IMR-90 (cell line): ENCODE measurements at regions of chr3 and their contacts with region 1.

Region 1: DNA sequence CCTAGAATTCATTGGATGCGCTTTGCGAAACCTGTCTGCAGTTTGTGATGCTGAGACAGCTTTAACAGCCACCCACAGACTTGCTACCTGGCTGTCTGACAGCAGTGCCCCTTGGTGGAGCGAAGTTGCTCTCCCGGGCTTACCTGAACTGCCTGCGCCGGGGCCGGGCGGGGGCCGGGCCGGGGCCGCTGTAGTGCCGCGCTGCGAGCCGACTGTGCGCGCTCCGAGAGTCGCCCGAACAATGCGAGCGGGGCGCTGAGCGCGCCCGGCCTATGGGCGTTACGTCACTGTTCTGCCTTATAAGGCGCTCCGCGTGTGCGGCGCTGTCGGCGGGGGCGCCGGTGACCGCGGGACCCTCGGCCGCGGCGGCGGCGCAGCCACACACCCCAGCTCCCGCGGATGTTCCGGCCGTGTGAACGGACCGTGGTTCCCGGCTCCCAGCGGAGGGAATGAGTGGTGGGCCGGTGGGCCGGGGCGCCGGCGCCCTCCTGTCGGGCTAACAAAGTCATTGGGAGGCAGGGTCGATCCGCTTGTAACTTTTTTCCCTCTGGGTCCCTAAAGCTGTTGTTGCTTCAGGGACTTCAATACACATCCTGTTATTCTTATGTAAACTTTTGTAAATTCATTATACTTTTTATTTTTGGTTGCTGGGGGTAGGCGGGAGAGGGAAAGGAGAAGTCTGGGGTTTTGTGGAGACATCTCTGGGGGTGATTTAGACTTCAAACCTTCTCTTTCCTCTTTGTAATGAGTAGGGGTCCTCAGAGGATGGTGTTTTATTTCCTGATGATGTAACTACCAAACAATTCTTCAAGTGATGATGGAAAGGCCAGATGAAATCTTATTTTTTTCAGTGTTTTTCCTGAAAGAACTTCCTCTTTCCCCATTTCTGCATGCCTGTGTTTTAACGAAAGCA is 58.5 kb downstream of the CMSS1 start:
- DNase-seq: peak; percentile 79
- ATAC-seq: peak; percentile 93
- H3K4me3 ChIP-seq: peak overlapping the region; percentile 88
- H3K27ac ChIP-seq: peak overlapping the region; percentile 88
- H3K4me1 ChIP-seq: peaks cover 8% of the 10 kb centered on the region
- H3K27me3 ChIP-seq: no peaks in the 10 kb centered on the region
- CTCF ChIP-seq: 0 out of 2 replicates have a peak, but pooled peaks have one; percentile 19
- POLR2A ChIP-seq: peak; percentile 95
- RAD21 ChIP-seq: peak; percentile 52

Region 2: GRCh38 chr3:99938270-99938911 is 62.2 kb after region 1 on chr3:
- CTCF ChIA-PET with region 1: no interaction called
- POLR2A ChIA-PET with region 1: no interaction called
- dilution Hi-C with region 1: no loop called
- in situ Hi-C with region 1: no loop called
- intact Hi-C with region 1: loop called (anchors 5 kb)
- DNase-seq: peak; percentile 54
- ATAC-seq: no peak; the same call in 1 of the 2 replicates
- H3K4me3 ChIP-seq: no peak overlapping the region
- H3K27ac ChIP-seq: peak overlapping the region; percentile 3; the same call in 1 of the 2 replicates
- H3K4me1 ChIP-seq: peaks cover 14% of the 10 kb centered on the region
- H3K27me3 ChIP-seq: no peaks in the 10 kb centered on the region
- CTCF ChIP-seq: no peak
- POLR2A ChIP-seq: no peak
- RAD21 ChIP-seq: no peak

Region 3: DNA sequence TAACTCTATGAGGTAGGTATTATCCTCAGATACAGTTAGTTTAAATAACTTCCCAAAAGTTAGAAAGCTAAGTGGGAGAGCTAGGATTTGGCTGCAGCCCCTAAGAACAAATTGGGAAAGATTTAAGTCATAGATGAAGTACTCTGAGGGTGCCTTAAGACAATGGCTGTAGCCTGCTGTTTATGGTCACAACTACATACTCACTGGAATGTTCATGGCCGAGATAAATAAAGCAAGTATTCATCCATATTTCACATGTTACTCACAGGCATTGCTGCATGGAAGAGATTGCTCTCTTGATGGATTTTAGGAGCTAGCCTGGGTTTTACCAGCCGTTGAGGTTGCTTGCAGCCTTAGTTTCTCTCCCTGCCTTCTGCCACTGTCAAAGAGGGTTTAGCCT is 86.5 kb after region 1 on chr3:
- CTCF ChIA-PET with region 1: no interaction called
- POLR2A ChIA-PET with region 1: no interaction called
- dilution Hi-C with region 1: no loop called
- in situ Hi-C with region 1: no loop called
- intact Hi-C with region 1: loop called (anchors 1 kb)
- DNase-seq: peak; percentile 91
- ATAC-seq: peak; percentile 90
- H3K4me3 ChIP-seq: no peak overlapping the region
- H3K27ac ChIP-seq: peak overlapping the region; percentile 46; the same call in 1 of the 2 replicates
- H3K4me1 ChIP-seq: peaks cover 17% of the 10 kb centered on the region
- H3K27me3 ChIP-seq: no peaks in the 10 kb centered on the region
- CTCF ChIP-seq: no peak
- POLR2A ChIP-seq: no peak
- RAD21 ChIP-seq: no peak

Region 4: DNA sequence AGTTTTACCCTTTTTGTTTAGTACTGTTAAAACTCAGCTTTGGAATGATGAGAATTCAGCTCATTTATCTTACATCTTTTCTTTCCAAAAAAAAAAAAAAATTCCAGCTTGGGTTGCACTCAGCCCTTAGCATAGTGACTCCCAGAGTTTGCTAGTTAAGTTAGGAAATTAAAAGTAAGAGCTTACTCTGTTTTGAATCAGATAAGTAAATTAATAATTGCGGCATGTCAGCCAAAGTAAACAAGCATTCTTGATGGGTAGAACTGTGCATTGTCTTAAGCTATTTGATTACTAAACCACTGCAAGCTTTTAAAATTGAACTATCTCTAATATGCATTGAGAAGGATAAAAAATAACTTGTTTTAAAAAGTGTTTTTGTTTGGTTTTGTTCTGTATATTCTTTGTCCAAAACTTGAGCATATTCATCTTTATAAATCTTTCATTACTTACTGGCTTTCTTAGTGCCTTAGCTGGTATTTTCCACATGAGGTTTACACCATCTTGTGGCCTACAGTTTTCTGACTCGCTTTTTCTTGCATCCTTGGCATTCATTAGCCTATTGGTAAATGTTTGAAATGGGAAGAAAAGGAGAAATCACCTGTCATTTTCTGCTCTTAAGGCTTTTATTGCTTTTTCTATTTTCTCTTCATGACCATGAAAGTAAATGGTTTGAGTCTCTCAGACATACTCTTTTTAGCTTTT is 130.5 kb after region 1 on chr3:
- CTCF ChIA-PET with region 1: no interaction called
- POLR2A ChIA-PET with region 1: interaction called, 3 read pairs
- dilution Hi-C with region 1: no loop called
- in situ Hi-C with region 1: no loop called
- intact Hi-C with region 1: loop called (anchors 2 kb)
- DNase-seq: peak; percentile 60
- ATAC-seq: peak; percentile 38; the same call in 1 of the 2 replicates
- H3K4me3 ChIP-seq: no peak overlapping the region
- H3K27ac ChIP-seq: no peak overlapping the region
- H3K4me1 ChIP-seq: peaks cover 11% of the 10 kb centered on the region
- H3K27me3 ChIP-seq: no peaks in the 10 kb centered on the region
- CTCF ChIP-seq: peak; percentile 36
- POLR2A ChIP-seq: no peak
- RAD21 ChIP-seq: peak; percentile 43

Region 5: DNA sequence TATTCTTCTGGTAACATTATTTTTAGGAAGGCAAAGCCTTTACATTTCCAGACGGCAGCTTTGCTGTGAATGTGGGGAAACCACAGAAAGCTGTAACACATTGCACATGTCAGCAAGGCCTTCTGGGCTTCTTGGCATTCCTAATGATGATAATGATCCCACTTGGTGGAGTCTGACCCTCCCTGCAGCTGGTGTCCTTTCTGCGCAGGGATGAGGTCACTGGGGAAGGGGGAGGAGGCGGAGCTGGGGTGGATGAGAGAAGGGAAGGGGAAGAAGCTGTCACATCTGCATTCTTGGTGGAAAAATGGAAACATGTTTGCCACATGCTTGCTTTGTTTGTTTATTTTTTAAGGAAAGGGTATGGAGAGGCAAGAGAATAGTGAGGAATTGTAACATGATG is 169.5 kb after region 1 on chr3:
- CTCF ChIA-PET with region 1: interaction called, 3 read pairs
- POLR2A ChIA-PET with region 1: interaction called, 6 read pairs
- dilution Hi-C with region 1: no loop called
- in situ Hi-C with region 1: loop called (anchors 25 kb)
- intact Hi-C with region 1: loop called (anchors 1 kb)
- DNase-seq: peak; percentile 99
- ATAC-seq: peak; percentile 69
- H3K4me3 ChIP-seq: no peak overlapping the region
- H3K27ac ChIP-seq: 0 out of 2 replicates have a peak overlapping the region, but pooled peaks have one; percentile 1
- H3K4me1 ChIP-seq: peaks cover 24% of the 10 kb centered on the region
- H3K27me3 ChIP-seq: peaks cover 4% of the 10 kb centered on the region; the same call in 1 of the 2 replicates
- CTCF ChIP-seq: no peak
- POLR2A ChIP-seq: no peak
- RAD21 ChIP-seq: peak; percentile 14

Region 6: DNA sequence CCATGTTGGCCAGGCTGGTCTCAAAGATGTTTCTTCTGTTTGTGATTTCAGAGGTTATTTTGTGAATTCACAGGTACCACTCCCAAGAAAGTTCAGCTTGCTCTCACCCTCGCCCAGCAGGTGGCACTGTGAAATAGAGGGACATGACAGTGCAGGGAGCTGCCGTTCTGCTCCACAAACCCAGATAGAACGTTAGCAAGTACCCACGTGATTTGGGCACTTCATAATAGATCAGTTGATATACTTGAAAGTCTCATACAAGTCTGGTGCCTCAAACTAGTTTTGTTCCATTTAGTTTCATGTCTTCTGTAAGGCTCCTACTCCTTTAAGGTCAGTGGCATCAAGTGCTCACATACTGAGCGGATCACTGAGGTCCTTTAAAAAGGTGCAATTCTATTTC is 192.6 kb after region 1 on chr3:
- CTCF ChIA-PET with region 1: no interaction called
- POLR2A ChIA-PET with region 1: interaction called, 4 read pairs
- dilution Hi-C with region 1: no loop called
- in situ Hi-C with region 1: loop called (anchors 25 kb)
- intact Hi-C with region 1: loop called (anchors 5 kb)
- DNase-seq: peak; percentile 79
- ATAC-seq: peak; percentile 30; the same call in 1 of the 2 replicates
- H3K4me3 ChIP-seq: no peak overlapping the region
- H3K27ac ChIP-seq: no peak overlapping the region
- H3K4me1 ChIP-seq: peaks cover 19% of the 10 kb centered on the region
- H3K27me3 ChIP-seq: no peaks in the 10 kb centered on the region
- CTCF ChIP-seq: peak; percentile 77
- POLR2A ChIP-seq: no peak
- RAD21 ChIP-seq: peak; percentile 82

Region 7: GRCh38 chr3:100210772-100211135 is 334.6 kb after region 1 on chr3:
- CTCF ChIA-PET with region 1: no interaction called
- POLR2A ChIA-PET with region 1: no interaction called
- dilution Hi-C with region 1: no loop called
- in situ Hi-C with region 1: no loop called
- intact Hi-C with region 1: no loop called
- DNase-seq: peak; percentile 95
- ATAC-seq: peak; percentile 74
- H3K4me3 ChIP-seq: no peak overlapping the region
- H3K27ac ChIP-seq: peak overlapping the region; percentile 86; the same call in 1 of the 2 replicates
- H3K4me1 ChIP-seq: peaks cover 18% of the 10 kb centered on the region
- H3K27me3 ChIP-seq: no peaks in the 10 kb centered on the region; the same call in 1 of the 2 replicates
- CTCF ChIP-seq: no peak
- POLR2A ChIP-seq: no peak
- RAD21 ChIP-seq: no peak

Region 8: GRCh38 chr3:100254168-100254777 is 378.1 kb after region 1 on chr3:
- CTCF ChIA-PET with region 1: interaction called, 3 read pairs
- POLR2A ChIA-PET with region 1: no interaction called
- dilution Hi-C with region 1: no loop called
- in situ Hi-C with region 1: no loop called
- intact Hi-C with region 1: loop called (anchors 1 kb)
- DNase-seq: peak; percentile 78
- ATAC-seq: peak; percentile 97
- H3K4me3 ChIP-seq: no peak overlapping the region
- H3K27ac ChIP-seq: no peak overlapping the region
- H3K4me1 ChIP-seq: peaks cover 5% of the 10 kb centered on the region
- H3K27me3 ChIP-seq: no peaks in the 10 kb centered on the region
- CTCF ChIP-seq: peak; percentile 91
- POLR2A ChIP-seq: 0 out of 2 replicates have a peak, but pooled peaks have one; percentile 24
- RAD21 ChIP-seq: peak; percentile 98